ENCODE measurements at regions of chr1 and their contacts with region 1.

Region 1: GRCh38 chr1:26761217-26761616 is 26.5 kb upstream of the PIGV start:
- DNase-seq: no peak
- H3K4me3 ChIP-seq: no peak overlapping the region
- H3K27ac ChIP-seq: no peak overlapping the region
- H3K4me1 ChIP-seq: no peaks in the 10 kb centered on the region
- H3K27me3 ChIP-seq: no peaks in the 10 kb centered on the region
- CTCF ChIP-seq: no peak
- EP300 ChIP-seq: no peak
- POLR2A ChIP-seq: no peak

Region 2: GRCh38 chr1:26723013-26723991 is 37.9 kb before region 1 on chr1:
- intact Hi-C with region 1: loop called in 1 of 4 experiments (anchors 5 kb)
- DNase-seq: peak; percentile 86 to 93 (median 91)
- H3K4me3 ChIP-seq: no peak overlapping the region
- H3K27ac ChIP-seq: peak overlapping the region; percentile 7 to 55
- H3K4me1 ChIP-seq: peaks cover 25% of the 10 kb centered on the region
- H3K27me3 ChIP-seq: no peaks in the 10 kb centered on the region
- CTCF ChIP-seq: no peak
- EP300 ChIP-seq: no peak
- POLR2A ChIP-seq: no peak

Measured in ovary (tissue), 10 donors.